ENCODE measurements at regions of chrX and their contacts with region 1.

Region 1: DNA sequence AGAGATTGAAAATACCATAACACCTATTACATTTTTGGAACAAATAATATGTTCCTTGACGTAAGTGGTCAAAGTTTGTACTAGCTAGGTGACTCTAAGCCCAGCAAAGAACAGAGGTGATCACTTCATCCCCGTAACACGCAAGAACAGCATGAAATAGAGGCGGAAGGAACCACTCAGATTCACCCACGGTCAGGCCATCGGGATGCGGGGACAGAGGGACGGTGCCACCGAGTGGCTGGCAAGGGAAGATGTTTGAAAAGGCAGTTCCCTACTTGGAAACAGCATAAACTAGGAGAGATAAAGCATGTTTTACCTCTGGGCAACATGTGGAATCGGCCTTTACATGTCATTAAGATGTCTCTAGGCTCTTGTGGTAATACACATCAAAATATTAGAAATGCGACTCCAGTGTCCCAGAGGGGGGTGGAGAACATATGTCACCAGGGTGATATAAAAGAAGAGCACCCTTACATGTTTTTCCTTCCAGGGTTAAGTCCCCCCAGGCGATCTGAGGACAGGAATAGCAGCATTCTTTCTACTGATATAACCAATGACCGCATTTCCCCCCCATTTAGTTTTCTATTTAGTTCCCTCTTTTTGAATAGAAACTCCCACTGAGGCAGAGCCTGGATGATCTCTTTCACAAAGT is 84.0 kb downstream of the PHKA2 start:
- DNase-seq: peak in 3 of 7 donors; percentile 33 to 69 (median 49)
- H3K4me3 ChIP-seq: no peak overlapping the region
- H3K27ac ChIP-seq: no peak overlapping the region
- H3K4me1 ChIP-seq: no peaks in the 10 kb centered on the region
- H3K27me3 ChIP-seq: no peaks in the 10 kb centered on the region
- CTCF ChIP-seq: peak in 5 of 6 experiments; percentile 18 to 44 (median 40)
- POLR2A ChIP-seq: no peak

Region 2: DNA sequence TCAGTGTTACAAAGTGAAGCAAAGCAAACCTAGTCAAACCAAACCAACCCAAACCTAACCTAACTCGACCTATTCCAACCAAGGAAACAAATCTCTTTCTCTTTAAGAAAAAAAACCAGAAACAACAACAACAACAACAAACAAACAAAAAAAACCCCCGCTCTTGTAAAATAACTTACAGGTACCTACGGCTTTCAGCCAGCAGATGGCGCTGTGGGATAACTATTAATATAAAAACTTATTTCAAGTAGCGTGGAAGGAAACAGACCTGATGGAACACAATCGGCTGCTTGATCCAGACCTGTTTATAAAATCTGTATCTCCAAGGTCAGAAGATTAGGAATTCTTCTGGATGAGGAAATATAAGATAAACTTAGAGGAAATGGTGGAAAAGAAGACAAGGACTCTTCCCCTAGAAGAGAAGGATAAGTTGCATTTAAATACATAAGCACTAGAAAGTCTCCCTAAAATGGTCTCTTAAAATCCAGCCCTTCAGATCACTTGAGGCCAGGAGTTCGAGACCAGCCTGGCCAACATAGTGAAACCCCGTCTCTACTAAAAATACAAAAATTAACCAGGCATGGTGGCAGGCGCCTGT is 508.9 kb before region 1 on chrX:
- intact Hi-C with region 1: loop called in 1 of 2 experiments (anchors 10 kb)
- DNase-seq: peak; percentile 41 to 86 (median 71)
- H3K4me3 ChIP-seq: no peak overlapping the region
- H3K27ac ChIP-seq: no peak overlapping the region
- H3K4me1 ChIP-seq: no peaks in the 10 kb centered on the region
- H3K27me3 ChIP-seq: peaks cover 5% of the 10 kb centered on the region
- CTCF ChIP-seq: peak; percentile 68 to 88 (median 78)
- POLR2A ChIP-seq: no peak

Region 3: DNA sequence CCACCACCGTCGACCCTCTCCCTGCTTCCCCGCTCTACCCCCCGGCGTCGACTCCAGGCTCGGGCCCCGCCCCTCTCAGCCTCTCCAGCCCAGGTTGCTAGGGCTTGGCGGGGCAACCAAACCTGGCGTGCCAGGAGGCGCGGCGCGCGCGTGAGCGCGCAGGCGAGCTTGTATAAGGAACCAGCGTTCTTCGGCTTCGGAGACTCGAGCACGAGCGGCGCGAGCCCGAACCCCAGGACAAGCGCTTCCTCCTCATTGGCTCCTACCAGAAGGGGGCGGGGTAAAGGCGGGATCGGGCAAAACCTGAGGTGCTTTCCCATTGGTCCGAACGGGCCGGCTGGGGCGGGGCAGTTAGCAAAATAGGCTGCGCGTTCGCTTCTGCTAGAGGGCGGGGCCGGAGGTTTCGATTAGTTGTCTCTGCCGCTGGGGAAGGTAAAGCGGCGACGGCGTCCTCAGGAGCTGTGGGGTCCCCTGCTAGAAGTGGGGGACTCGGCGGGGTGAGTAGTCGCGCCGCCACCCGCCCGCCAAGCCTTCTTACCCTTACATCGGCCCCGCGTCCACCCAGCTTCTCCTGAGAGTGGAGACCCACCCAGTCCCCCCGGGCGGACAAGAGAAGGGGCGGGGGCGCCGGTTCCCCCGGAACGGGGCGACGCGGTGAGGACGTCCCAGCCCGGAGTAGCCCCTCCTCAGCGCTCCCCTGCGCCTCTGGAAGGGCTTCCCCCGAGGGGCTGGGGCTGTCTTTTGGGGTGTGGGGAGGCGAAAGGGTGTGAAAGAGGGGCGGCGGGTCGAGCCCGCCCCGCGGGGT is 474.5 kb before region 1 on chrX and contains the start of gene CDKL5:
- intact Hi-C with region 1: loop called in 1 of 2 experiments (anchors 10 kb)
- DNase-seq: peak; percentile 96 to 99 (median 98)
- H3K4me3 ChIP-seq: peak within 1 kb of the TSS in 3 of 4 donors; percentile 32 to 83 (median 52)
- H3K27ac ChIP-seq: peak within 1 kb of the TSS in 4 of 5 donors; percentile 51 to 84 (median 60)
- H3K4me1 ChIP-seq: no peaks in the 10 kb centered on the region
- H3K27me3 ChIP-seq: no peaks in the 10 kb centered on the region
- CTCF ChIP-seq: no peak
- POLR2A ChIP-seq: peak; percentile 25 to 89
- total RNA-seq, gene CDKL5: 3.8 to 13.8 (median 7.8) TPM

Region 4: GRCh38 chrX:18674788-18675735 is 224.9 kb before region 1 on chrX:
- intact Hi-C with region 1: loop called in 1 of 2 experiments (anchors 10 kb)
- DNase-seq: peak; percentile 61 to 81 (median 69)
- H3K4me3 ChIP-seq: peak overlapping the region in 3 of 4 donors; percentile 8 to 69 (median 32)
- H3K27ac ChIP-seq: peak overlapping the region in 4 of 5 donors; percentile 46 to 85 (median 70)
- H3K4me1 ChIP-seq: no peaks in the 10 kb centered on the region
- H3K27me3 ChIP-seq: no peaks in the 10 kb centered on the region
- CTCF ChIP-seq: no peak
- POLR2A ChIP-seq: peak in 1 of 2 donors; percentile 29